G401 (cell line): ENCODE measurements at regions of chr7 and their contacts with region 1.

Region 1: DNA sequence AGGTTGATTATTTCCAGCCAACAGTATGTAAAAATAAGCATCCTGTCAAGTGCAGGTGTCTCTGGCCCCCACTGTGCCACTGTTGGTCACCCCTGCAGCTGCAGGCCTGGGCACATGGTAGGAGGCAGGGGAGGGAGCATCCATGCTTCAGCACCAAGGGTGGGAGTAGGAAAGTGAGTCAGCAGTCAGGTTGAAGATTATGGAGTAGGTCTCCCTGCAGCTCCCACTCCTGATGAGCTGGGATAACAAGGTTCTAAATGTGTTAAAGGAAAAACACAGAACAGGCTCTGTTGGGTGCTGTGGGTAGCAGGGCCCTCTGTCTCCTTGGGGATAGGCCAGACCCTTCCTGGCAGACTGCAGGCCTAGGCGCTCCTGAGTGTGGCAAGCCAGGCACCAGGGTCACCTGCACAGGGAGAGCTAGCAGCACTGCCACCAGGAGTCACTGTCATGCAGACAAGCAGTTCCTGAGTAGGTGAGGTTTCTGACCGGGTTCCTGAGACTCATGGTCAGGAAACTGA is 59.3 kb downstream of the NUDCD3 start:
- DNase-seq: peak; percentile 61

Region 2: DNA sequence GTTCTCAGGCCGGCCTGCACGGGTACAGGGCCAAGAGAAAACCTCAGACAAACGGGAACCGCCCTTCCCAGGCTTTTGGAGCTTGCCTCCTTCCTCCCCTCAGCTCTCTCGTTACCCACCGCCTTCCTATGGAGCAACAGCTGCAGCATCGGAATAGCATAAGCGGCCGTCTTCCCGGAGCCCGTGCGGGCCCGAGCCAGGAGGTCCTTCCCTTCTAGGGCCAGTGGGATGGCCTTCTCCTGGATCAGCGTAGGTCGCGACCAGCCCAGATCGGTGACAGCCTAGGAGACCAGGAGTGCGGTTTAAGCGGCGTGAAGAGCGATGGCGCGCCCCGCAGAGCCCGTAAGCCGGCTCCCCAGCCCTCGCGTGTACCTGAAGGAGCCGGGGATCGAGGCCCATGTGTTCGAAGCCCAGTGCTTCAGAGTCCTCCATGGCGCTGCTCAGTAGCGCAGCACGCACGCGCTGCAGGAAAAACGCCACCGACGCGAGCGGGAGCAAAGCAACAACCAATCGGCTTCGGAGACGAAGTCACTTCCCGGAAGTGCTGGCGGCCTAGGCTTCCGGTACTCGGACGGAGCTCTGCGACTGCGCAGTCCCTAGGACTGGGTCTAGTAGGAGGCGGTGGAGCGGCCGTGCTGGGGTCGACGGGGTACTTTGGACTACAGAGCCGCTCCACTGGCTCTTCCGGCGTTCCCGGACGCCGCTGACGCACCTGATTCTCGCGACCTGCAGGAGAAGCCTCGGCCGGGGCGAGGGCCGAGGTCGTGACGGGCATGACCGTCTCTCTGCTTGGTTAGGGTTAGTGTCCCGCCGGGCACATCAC is 142.5 kb after region 1 on chr7 and contains the start of gene DDX56:
- in situ Hi-C with region 1: loop called (anchors 25 kb)
- DNase-seq: peak; percentile 95
- total RNA-seq, gene DDX56: 101 and 124 TPM in 2 replicates